ENCODE measurements at regions of chr9 and their contacts with region 1.

Region 1: GRCh38 chr9:74773886-74774479 is 113.7 kb downstream of the TRPM6 start:
- DNase-seq: peak; percentile 85
- H3K4me3 Mint-ChIP-seq: no peak overlapping the region
- H3K27ac Mint-ChIP-seq: no peak overlapping the region
- H3K4me1 Mint-ChIP-seq: no peaks in the 10 kb centered on the region
- H3K27me3 Mint-ChIP-seq: peaks cover 3% of the 10 kb centered on the region
- CTCF ChIP-seq: peak; percentile 76

Region 2: DNA sequence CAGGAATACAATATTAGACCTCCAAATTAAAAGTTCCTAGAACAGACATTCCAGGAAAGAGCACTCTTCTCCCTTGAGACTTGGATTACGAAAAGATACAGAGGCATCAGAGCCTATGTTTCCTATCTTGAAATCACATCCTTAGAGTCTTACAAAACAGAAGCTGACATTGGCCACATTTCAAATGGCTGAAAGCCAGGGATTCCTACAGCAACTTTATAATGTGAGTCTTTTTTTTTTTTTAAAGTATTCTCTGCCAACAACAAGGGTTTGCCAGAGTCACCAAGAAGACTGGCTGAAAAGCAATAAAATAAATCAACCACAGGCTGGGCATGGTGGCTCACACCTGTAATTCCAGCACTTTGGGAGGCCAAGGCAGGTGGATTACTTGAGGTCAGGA is 50.7 kb after region 1 on chr9:
- CTCF ChIA-PET with region 1: interaction called, 11 read pairs
- POLR2A ChIA-PET with region 1: no interaction called
- intact Hi-C with region 1: no loop called
- DNase-seq: peak; percentile 97
- H3K4me3 Mint-ChIP-seq: no peak overlapping the region
- H3K27ac Mint-ChIP-seq: no peak overlapping the region
- H3K4me1 Mint-ChIP-seq: no peaks in the 10 kb centered on the region
- H3K27me3 Mint-ChIP-seq: no peaks in the 10 kb centered on the region
- CTCF ChIP-seq: no peak

Region 3: GRCh38 chr9:74952281-74953151 is 178.5 kb after region 1 on chr9 and contains the start of gene C9orf40:
- CTCF ChIA-PET with region 1: interaction called, 170 read pairs
- POLR2A ChIA-PET with region 1: no interaction called
- intact Hi-C with region 1: loop called (anchors 2 kb)
- DNase-seq: peak; percentile 82
- H3K4me3 Mint-ChIP-seq: peak within 1 kb of the TSS; percentile 88
- H3K27ac Mint-ChIP-seq: peak within 1 kb of the TSS; percentile 92
- H3K4me1 Mint-ChIP-seq: peaks cover 9% of the 10 kb centered on the region
- H3K27me3 Mint-ChIP-seq: no peaks in the 10 kb centered on the region
- CTCF ChIP-seq: peak; percentile 69
- total RNA-seq, gene C9orf40: 5.6 and 5.8 TPM in 2 replicates

Region 4: DNA sequence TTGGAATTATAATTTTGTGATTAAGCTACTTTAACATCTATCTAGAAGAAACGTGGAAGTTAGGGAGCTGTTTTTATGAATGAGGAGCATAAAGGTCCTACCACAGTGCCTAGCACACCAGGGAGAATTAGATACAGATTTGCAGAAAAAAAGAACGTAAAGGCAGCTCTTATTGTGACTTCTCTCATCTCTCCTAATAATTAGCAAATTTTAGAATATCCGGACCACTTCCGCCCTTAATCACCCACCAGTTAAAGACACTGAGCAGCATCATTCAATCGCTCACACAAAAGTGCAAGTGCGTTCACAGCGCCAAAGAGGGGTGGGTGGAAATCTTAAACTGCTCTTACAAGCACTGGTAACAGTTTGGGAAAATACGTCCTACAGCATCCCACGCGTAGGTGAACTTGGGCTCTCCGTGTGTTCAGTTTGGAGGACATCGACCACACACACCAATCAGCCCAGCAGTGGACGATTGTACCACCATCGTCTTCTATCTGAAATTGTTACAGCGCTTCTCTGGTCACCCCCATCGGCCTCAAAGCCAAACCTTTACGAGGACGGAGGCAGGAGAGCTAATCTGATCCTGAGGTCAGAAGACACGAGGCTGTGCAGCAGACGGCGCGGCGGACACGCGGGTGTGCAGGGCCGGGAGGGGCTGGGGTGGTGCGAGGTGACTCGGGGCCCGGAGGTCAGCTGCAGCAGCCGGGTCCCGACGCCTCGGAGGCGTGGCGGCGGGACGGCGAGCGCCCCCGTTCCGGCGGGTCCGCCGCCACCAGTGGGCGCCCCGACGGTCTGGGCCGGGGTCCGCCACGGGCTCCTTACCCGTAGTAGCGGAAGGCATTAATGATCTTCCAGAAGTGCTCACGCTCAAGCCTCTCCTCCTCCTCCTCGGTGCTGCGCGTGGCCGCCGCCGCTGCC is 253.5 kb after region 1 on chr9:
- CTCF ChIA-PET with region 1: interaction called, 42 read pairs
- POLR2A ChIA-PET with region 1: interaction called, 5 read pairs
- intact Hi-C with region 1: no loop called
- DNase-seq: peak; percentile 50
- H3K4me3 Mint-ChIP-seq: peak overlapping the region; percentile 95
- H3K27ac Mint-ChIP-seq: peak overlapping the region; percentile 21
- H3K4me1 Mint-ChIP-seq: peaks cover 12% of the 10 kb centered on the region
- H3K27me3 Mint-ChIP-seq: no peaks in the 10 kb centered on the region
- CTCF ChIP-seq: no peak

Region 5: DNA sequence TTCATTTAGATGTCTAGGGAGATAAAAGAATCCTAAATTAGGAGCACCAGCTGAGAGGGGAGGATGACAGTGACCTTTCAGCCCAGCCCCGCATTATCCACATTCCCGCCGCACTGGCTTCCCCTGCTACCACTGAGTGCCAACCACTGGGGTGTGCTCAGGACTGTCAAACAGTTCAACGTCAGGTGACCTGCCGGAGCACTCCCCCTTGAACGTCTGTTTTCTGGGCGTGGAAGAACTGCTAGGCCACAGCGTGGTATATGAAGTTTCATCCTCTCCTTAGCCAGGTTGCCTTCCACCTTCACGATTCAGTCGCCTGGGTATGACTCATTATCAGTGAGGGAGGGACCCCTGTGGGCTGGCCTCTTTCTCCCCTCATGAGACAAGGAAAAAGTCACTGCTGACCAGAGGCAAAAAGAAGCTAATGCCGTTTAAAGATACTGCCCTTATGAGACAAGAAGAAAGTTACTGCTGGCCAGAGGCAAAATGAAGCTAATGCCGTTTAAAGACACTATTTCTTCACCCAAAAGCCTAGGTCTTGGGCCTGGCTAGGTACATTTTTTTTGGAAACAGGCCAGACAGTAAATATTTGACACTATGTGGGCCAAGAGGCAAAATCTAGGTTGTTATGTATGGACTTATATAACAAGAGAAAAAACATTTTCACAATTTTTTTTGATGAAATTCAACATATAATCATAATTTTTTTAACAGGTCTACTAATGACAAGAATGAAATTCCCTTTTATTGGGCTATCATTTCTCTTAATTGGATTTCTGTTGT is 309.4 kb after region 1 on chr9:
- CTCF ChIA-PET with region 1: interaction called, 113 read pairs
- POLR2A ChIA-PET with region 1: interaction called, 4 read pairs
- intact Hi-C with region 1: no loop called
- DNase-seq: peak; percentile 56
- H3K4me3 Mint-ChIP-seq: no peak overlapping the region
- H3K27ac Mint-ChIP-seq: peak overlapping the region; percentile 73
- H3K4me1 Mint-ChIP-seq: peaks cover 21% of the 10 kb centered on the region
- H3K27me3 Mint-ChIP-seq: no peaks in the 10 kb centered on the region
- CTCF ChIP-seq: no peak

Region 6: DNA sequence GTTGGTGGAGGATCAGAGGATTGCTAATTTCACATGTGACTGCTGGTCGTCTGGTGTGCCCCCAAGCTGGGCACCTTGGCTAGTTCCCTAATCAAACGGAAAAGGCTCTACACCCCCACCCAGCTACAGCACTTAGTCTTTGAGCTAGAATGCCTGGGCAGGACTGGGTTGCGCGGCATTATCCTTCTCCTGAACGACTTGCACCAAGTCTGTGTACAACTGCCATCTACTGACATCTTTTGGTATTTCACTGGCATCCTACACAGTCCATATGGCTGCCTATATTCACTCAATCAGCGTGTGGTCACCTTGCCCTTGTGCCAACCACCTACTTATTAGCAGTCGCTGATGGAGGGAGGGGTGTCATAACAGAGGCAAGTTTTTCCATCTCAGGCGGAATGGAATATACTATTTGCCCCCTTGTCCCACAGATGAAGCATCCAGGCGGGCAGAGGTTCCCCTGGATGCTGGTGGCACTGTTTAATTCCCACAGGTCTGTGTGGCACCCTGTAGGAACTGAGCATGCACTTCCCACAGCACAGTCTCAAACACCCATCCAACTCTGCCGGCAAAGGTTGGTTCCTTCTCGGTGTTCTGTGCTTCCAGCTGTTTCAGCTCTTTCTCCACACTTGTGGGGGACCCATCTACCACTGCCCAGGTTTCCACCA is 464.5 kb after region 1 on chr9:
- CTCF ChIA-PET with region 1: interaction called, 3 read pairs
- POLR2A ChIA-PET with region 1: no interaction called
- intact Hi-C with region 1: loop called (anchors 1 kb)
- DNase-seq: peak; percentile 89
- H3K4me3 Mint-ChIP-seq: no peak overlapping the region
- H3K27ac Mint-ChIP-seq: no peak overlapping the region
- H3K4me1 Mint-ChIP-seq: peaks cover 18% of the 10 kb centered on the region
- H3K27me3 Mint-ChIP-seq: no peaks in the 10 kb centered on the region
- CTCF ChIP-seq: peak; percentile 72

Measured in MCF 10A (cell line).